Thyroid gland (tissue), 4 donors: ENCODE measurements at regions of chr12 and their contacts with region 1.

Region 1: DNA sequence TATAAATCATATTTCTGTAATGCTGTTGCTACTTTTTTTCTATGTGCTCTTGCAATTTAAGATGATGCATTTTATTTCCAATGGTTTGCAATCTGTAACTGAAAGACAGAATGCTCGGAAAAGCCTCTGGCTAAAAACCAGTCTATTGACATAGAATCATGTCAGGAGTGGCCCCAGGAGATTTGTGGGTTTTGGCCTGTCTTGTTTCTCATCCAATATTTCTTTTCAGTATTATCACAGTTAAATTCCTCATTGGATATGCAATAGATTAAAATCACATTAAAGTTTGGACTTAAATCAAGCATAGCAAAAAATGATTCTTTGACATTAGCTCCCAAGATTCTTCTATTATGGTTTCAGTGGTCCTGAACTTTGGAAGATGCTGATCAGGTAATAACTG is 19.1 kb upstream of the SLC38A2 start:
- DNase-seq: peak in 1 of 2 donors; percentile 4
- H3K4me3 ChIP-seq: no peak overlapping the region
- H3K27ac ChIP-seq: peak overlapping the region in 1 of 3 donors; percentile 51
- H3K4me1 ChIP-seq: peaks cover 22 to 30% of the 10 kb centered on the region in 2 donors
- H3K27me3 ChIP-seq: no peaks in the 10 kb centered on the region
- CTCF ChIP-seq: no peak
- POLR2A ChIP-seq: no peak

Region 2: GRCh38 chr12:46292755-46293402 is 98.8 kb before region 1 on chr12:
- intact Hi-C with region 1: no loop called
- DNase-seq: no peak
- H3K4me3 ChIP-seq: no peak overlapping the region
- H3K27ac ChIP-seq: no peak overlapping the region
- H3K4me1 ChIP-seq: no peaks in the 10 kb centered on the region
- H3K27me3 ChIP-seq: no peaks in the 10 kb centered on the region
- CTCF ChIP-seq: no peak
- POLR2A ChIP-seq: no peak

Region 3: GRCh38 chr12:46442239-46442638 is 50.6 kb after region 1 on chr12:
- intact Hi-C with region 1: loop called (anchors 10 kb)
- DNase-seq: no peak
- H3K4me3 ChIP-seq: no peak overlapping the region
- H3K27ac ChIP-seq: no peak overlapping the region
- H3K4me1 ChIP-seq: peaks cover 15 to 29% of the 10 kb centered on the region in 2 donors
- H3K27me3 ChIP-seq: no peaks in the 10 kb centered on the region
- CTCF ChIP-seq: no peak
- POLR2A ChIP-seq: no peak

Region 4: DNA sequence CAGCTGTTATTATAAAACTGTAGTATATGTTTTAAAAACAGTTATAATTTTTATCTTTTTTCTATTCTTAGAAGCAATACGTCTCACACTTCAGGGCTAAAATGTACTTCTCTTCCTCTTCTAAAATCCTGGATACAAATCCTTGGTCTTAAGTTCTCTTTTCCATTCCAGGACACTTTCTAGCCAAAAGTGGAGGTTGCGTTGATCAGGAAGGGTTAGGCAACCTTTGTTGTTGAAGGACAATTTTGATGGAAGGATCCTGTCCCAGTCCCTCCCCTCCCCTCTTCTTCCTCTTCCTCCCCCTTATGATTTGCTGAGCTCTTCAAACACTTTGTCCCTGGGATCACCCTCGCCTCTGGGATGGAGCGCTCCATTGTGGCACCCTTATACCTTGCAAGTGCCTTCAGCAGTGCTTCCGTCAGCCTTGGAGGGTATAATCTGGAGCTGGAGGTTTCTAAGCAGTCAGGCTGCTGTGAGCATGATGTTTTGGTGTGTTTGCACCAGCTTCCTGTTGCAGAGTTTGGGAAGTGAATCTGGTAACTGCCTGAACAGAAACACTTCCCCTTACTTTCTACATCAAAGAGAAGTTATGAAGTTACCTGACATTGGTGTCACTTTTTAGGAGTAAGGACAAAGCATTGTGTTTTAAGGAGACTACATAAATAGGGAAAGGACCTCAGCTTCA is 68.4 kb after region 1 on chr12:
- intact Hi-C with region 1: no loop called
- DNase-seq: no peak
- H3K4me3 ChIP-seq: no peak overlapping the region
- H3K27ac ChIP-seq: no peak overlapping the region
- H3K4me1 ChIP-seq: peaks cover 24 to 33% of the 10 kb centered on the region in 2 donors
- H3K27me3 ChIP-seq: no peaks in the 10 kb centered on the region
- CTCF ChIP-seq: no peak
- POLR2A ChIP-seq: no peak